Activated CD8-positive, alpha-beta T cell treated with anti-CD3 and anti-CD28 coated beads, Interleukin-2, amount 10 ng/mL, durations not matched to agents 7 days and 5 days (primary cell): ENCODE measurements at regions of chr2 and their contacts with region 1.

Region 1: GRCh38 chr2:17672583-17673317 is 80.9 kb downstream of the SMC6 start:
- DNase-seq: no peak
- ATAC-seq: no peak
- H3K4me3 Mint-ChIP-seq: no peak overlapping the region
- H3K27ac Mint-ChIP-seq: no peak overlapping the region
- H3K4me1 Mint-ChIP-seq: no peaks in the 10 kb centered on the region
- H3K27me3 Mint-ChIP-seq: no peaks in the 10 kb centered on the region

Region 2: DNA sequence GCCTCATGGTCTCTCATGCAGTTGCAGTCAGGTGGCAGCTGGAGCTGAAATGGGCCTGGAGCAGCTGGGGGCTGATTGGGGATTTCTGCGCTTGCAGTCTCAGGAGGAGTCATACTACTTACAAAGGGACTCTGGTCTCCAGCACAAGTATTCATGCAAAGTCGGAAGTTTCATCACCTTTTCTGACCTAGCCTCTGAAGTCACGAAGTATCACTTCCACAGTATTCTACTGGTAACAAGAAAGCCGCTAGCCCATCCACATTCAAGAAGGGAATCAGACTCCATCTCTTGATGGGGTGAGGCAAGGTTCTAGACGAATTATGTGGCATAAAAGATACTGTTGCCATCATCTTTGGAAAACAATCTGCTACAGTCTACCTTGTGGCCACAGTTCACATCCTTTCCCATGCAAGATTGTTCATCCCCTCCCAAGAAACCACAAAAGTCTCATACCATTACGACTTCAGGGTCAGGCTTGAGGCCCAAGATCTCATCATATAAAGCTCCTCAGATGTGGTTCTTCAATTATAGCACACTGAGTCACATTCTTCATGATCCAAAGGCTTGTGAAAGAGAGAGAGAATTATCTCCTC is 14.4 kb before region 1 on chr2:
- CTCF ChIA-PET with region 1: interaction called, 52 read pairs
- POLR2A ChIA-PET with region 1: no interaction called
- DNase-seq: no peak
- ATAC-seq: no peak
- H3K4me3 Mint-ChIP-seq: no peak overlapping the region
- H3K27ac Mint-ChIP-seq: no peak overlapping the region
- H3K4me1 Mint-ChIP-seq: peaks cover 16% of the 10 kb centered on the region
- H3K27me3 Mint-ChIP-seq: no peaks in the 10 kb centered on the region